ENCODE measurements at regions of chrX and their contacts with region 1.

Region 1: GRCh38 chrX:9677098-9677739 is 88.4 kb downstream of the GPR143 start:
- DNase-seq: peak; percentile 51
- H3K4me3 Mint-ChIP-seq: no peak overlapping the region
- H3K27ac Mint-ChIP-seq: peak overlapping the region; percentile 50
- H3K4me1 Mint-ChIP-seq: peaks cover 23% of the 10 kb centered on the region
- H3K27me3 Mint-ChIP-seq: no peaks in the 10 kb centered on the region

Region 2: DNA sequence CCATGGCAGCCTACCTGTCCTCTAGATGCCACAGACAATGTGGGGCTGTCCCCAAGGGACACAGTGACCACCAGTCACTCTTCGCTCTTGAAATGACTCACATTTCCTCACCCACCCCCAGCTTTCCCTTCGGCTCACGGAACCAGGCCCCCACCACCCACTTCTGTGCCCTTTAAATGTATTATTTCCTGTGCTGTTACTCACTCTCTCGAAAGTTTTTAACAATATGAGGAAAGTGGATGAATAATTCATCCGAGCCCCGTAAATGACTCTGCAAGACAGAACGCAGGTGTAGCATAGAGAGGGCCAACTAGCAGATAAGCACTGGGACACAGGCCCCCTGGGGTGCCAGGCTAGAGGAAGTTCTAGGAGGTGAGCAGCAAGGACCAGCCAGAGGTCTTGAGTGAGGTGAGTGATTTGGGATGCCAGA is 391.9 kb before region 1 on chrX:
- CTCF ChIA-PET with region 1: no interaction called
- intact Hi-C with region 1: loop called (anchors 1 kb)
- DNase-seq: peak; percentile 78
- H3K4me3 Mint-ChIP-seq: no peak overlapping the region
- H3K27ac Mint-ChIP-seq: peak overlapping the region; percentile 83
- H3K4me1 Mint-ChIP-seq: peaks cover 25% of the 10 kb centered on the region
- H3K27me3 Mint-ChIP-seq: no peaks in the 10 kb centered on the region

Region 3: DNA sequence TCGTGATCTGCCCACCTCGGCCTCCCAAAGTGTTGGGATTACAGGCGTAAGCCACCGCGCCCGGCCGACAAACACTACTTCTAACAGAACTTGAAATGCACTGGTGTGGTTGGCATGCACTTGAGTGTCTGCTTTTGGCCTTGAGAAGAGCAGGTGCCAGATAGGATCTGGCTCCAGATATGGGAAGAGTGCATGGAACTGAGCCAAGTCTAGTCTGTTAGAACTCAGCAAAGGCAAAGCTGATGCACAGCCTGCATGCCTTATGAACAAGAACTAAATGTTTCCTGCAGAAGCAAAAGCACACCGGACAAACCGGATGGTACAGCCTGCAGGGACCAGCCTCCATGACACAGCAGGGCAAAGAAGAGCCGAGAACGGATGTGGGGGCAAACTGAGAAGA is 247.4 kb before region 1 on chrX:
- CTCF ChIA-PET with region 1: no interaction called
- intact Hi-C with region 1: no loop called
- DNase-seq: no peak
- H3K4me3 Mint-ChIP-seq: no peak overlapping the region
- H3K27ac Mint-ChIP-seq: no peak overlapping the region
- H3K4me1 Mint-ChIP-seq: no peaks in the 10 kb centered on the region
- H3K27me3 Mint-ChIP-seq: no peaks in the 10 kb centered on the region

Region 4: DNA sequence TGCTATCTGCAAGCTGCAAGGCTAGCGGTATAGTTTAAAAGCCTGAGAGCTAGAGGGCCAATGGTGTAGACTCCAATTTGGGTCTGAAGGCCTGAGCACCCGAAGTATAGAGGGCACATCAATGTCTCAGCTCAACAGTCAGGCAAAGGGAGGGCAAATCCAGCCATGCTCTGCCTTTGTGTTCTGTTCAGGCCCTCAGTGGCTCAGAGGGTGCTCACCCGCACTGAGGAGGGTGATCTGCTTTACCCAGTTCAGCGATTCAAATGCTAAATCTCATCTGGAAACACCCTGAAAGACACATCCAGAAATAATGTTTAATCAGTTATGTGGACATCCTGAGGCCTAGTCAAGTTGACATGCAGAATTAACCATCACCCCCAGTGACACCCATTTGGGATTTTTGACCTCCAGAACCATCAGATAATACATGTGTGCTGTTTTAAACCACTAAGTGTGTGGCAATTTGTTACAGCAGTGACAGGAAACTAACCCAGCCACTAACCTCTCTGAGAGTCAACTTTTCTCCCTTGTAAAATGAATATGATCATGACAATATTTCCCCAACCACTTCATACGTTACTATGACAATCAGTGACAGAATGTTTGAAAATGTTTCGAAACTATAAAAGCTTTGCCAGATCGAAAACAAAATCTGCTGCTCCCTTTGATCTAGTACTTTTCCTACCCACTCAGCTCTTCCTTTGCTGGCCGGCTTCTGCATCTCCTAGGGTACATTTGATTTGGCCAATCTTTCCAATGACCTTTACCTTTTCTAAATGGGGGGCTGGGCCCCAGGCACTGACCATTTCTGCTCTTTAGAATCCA is 220.8 kb before region 1 on chrX:
- CTCF ChIA-PET with region 1: no interaction called
- intact Hi-C with region 1: loop called (anchors 1 kb)
- DNase-seq: peak; percentile 45
- H3K4me3 Mint-ChIP-seq: no peak overlapping the region
- H3K27ac Mint-ChIP-seq: peak overlapping the region; percentile 74
- H3K4me1 Mint-ChIP-seq: peaks cover 38% of the 10 kb centered on the region
- H3K27me3 Mint-ChIP-seq: no peaks in the 10 kb centered on the region

Region 5: DNA sequence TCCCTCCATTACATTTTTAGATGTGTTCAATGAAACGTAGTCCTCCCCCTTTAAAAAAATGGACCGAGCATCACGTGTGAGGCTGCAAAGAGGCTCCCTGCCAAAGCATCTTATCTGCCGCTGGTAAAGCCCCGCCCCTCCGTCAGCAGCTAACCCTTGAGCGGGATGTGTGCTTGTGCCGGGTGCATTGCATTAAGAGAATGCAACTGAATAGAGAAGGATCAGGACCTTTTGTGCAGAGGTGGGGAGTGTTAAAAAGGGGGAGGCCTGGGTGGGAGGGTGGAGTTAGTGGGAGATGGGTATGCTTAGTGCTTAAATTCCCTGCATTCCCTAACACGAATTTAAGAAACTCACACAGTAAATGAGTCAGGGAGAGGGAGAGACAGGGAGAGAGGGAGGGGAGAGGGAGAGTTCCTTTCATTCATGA is 146.4 kb before region 1 on chrX:
- CTCF ChIA-PET with region 1: interaction called, 6 read pairs
- intact Hi-C with region 1: loop called (anchors 1 kb)
- DNase-seq: peak; percentile 69
- H3K4me3 Mint-ChIP-seq: peak overlapping the region; percentile 61
- H3K27ac Mint-ChIP-seq: no peak overlapping the region
- H3K4me1 Mint-ChIP-seq: peaks cover 49% of the 10 kb centered on the region
- H3K27me3 Mint-ChIP-seq: no peaks in the 10 kb centered on the region

Region 6: GRCh38 chrX:9644335-9644734 is 32.9 kb before region 1 on chrX:
- CTCF ChIA-PET with region 1: no interaction called
- intact Hi-C with region 1: loop called (anchors 1 kb)
- DNase-seq: peak; percentile 70
- H3K4me3 Mint-ChIP-seq: no peak overlapping the region
- H3K27ac Mint-ChIP-seq: no peak overlapping the region
- H3K4me1 Mint-ChIP-seq: peaks cover 31% of the 10 kb centered on the region
- H3K27me3 Mint-ChIP-seq: no peaks in the 10 kb centered on the region

Region 7: DNA sequence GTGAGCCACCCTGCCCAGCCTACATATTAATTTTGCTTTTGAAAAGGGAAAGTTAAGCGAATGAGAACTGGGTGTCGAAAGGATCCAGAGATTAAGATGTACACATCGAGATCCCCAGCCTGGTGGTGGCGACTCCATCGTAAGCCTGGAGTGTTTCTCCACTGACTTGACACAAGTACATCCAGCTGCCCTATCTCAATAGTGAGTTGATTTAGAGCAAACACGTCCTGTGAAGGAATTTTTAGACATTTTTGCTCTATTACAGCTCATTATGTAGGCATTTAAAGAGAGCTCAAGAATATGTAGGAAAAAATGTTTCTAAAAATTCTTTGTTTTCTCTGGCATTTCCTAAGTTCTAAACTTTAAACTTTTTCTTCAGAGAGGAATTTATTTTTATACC is 278.3 kb after region 1 on chrX:
- CTCF ChIA-PET with region 1: no interaction called
- intact Hi-C with region 1: no loop called
- DNase-seq: no peak
- H3K4me3 Mint-ChIP-seq: no peak overlapping the region
- H3K27ac Mint-ChIP-seq: no peak overlapping the region
- H3K4me1 Mint-ChIP-seq: no peaks in the 10 kb centered on the region
- H3K27me3 Mint-ChIP-seq: peaks cover 5% of the 10 kb centered on the region

Measured in activated naive CD4-positive, alpha-beta T cell treated with anti-CD3 and anti-CD28 coated beads for 36 hours (primary cell).